Activated CD4-positive, alpha-beta memory T cell treated with anti-CD3 and anti-CD28 coated beads for 36 hours (primary cell): ENCODE measurements at regions of chr1 and their contacts with region 1.

Region 1: GRCh38 chr1:93021539-93022134 is 57.4 kb upstream of the MTF2 start:
- DNase-seq: no peak
- H3K4me3 Mint-ChIP-seq: no peak overlapping the region
- H3K27ac Mint-ChIP-seq: no peak overlapping the region
- H3K4me1 Mint-ChIP-seq: no peaks in the 10 kb centered on the region
- H3K27me3 Mint-ChIP-seq: peaks cover 6% of the 10 kb centered on the region

Region 2: DNA sequence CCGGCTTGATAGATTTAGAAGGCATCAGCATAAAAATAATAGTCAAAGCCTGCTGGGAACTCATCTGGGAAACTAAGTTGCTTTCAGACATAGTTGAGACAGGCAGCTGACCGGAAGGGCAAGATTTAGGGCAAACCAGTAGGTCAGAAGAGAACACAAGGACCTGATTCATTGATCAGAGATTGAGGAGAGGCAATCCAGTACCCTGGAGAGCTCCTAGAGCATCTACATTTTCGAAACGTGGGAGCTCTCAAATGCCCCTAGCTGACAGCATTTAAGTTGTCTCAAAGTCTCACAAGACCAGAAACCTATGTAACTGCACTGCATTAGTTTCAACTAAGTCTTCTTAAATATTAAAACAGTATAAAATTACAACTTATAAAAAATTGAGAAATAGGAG is 34.6 kb after region 1 on chr1:
- CTCF ChIA-PET with region 1: interaction called, 141 read pairs
- POLR2A ChIA-PET with region 1: no interaction called
- intact Hi-C with region 1: no loop called
- DNase-seq: peak; percentile 13
- H3K4me3 Mint-ChIP-seq: no peak overlapping the region
- H3K27ac Mint-ChIP-seq: no peak overlapping the region
- H3K4me1 Mint-ChIP-seq: no peaks in the 10 kb centered on the region
- H3K27me3 Mint-ChIP-seq: peaks cover 7% of the 10 kb centered on the region

Region 3: DNA sequence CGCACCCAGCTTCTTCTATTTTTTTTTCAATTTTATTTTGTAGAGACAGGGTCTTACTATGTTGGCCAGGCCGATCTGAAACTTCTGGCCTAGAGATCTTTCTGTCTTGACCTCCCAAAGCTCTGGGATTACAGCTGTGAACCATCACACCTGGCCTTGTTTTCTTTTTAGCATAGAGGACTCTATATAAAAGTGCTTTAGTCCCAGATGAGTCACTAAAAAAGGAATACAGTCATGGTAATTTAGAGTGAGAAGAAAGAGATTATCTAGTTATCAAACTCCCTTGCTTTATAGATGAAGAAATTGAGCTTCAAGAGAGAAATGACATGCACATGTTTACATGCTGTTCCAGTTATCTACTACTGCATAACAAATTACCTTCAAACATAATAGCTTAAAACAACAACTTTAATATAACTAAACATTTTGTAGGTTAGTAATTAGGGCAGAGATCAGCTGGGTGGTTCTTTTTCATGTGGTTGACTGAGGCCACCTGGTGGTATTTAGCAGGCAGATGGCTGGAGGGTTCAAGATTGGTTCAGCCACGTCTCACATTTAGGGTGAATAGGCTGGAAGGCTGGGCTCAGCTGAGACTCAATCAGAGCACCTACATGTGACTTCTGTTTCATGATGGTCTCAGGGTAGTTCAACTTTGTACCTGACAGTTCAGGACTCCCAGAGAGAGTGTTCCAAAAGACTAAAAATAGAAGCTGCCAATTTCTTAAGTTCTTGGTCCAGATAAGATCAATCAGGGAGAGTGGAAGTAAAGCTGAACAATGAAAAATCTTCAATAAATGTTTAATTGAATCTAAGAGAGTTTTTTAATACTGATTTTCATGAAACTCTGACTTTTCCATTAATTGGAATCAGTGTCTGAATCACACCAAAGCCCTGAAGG is 40.5 kb after region 1 on chr1:
- CTCF ChIA-PET with region 1: interaction called, 141 read pairs
- POLR2A ChIA-PET with region 1: no interaction called
- intact Hi-C with region 1: loop called (anchors 1 kb)
- DNase-seq: peak; percentile 61
- H3K4me3 Mint-ChIP-seq: no peak overlapping the region
- H3K27ac Mint-ChIP-seq: no peak overlapping the region
- H3K4me1 Mint-ChIP-seq: peaks cover 4% of the 10 kb centered on the region
- H3K27me3 Mint-ChIP-seq: peaks cover 9% of the 10 kb centered on the region

Region 4: GRCh38 chr1:93471911-93472310 is 450.3 kb after region 1 on chr1:
- CTCF ChIA-PET with region 1: no interaction called
- POLR2A ChIA-PET with region 1: no interaction called
- intact Hi-C with region 1: no loop called
- DNase-seq: no peak
- H3K4me3 Mint-ChIP-seq: no peak overlapping the region
- H3K27ac Mint-ChIP-seq: no peak overlapping the region
- H3K4me1 Mint-ChIP-seq: no peaks in the 10 kb centered on the region
- H3K27me3 Mint-ChIP-seq: peaks cover 4% of the 10 kb centered on the region